ENCODE measurements at regions of chr1 and their contacts with region 1.

Region 1: DNA sequence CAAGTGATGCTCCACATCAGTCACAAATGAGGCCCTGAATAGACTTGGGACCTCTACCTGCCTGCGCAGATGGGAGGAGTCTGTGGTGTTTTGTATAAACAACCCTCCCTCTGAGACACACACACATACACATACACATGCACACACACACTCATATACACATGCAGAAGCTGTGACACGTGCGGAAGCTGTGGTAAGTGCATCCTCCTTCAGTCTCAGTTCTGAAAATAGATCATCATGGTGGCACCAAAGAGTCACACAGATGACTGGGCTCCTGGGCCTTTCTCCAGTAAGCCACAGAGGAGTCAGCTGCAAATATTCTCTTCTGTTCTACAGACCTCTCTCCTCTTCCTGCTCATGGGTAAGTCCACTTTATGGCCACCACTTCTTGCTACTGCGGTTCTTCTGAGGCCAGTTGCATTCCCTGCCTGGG is at the start of gene LY9:
- DNase-seq: peak; percentile 92
- H3K4me3 Mint-ChIP-seq: peak within 1 kb of the TSS; percentile 86
- H3K27ac Mint-ChIP-seq: peak within 1 kb of the TSS; percentile 98
- H3K4me1 Mint-ChIP-seq: peaks cover 50% of the 10 kb centered on the region
- H3K27me3 Mint-ChIP-seq: no peaks in the 10 kb centered on the region
- total RNA-seq, gene LY9: 19.5 to 19.6 TPM

Region 2: DNA sequence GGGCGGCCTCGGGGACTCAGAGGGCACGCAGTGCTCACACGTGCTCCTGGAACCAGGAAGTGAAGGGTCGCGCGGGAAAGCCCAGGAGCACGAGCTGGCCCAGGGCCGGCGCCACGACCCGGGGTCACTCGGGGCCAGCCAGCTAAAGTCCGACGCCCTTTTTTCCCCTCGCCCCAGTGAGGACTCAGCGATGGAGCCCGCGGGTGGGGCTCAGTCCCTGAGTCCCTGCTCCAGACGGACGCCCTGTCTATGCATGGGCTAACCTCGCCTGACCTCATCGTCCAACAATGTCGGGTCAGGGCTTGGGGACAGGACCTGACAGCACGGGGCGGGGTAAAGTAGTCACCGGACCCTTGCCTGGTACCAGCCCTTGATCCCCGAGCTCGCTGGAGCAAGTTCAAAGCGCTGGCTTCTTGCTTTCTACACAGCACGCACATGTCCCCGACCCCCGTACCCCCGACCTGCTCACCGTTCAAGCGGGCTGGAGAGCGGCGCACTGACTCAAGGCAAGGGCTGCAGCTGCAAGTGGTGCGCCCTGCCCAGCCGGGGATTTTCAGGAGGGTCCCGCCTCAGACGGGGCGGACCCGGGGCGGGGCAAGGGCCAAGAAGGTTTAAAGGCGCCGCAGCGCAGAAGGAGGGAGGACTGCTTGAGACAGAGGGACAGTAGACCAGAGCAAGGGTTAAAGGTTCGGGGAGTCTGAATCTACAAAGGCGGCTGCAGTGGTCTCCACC is 870.8 kb before region 1 on chr1 and contains the start of gene TAGLN2:
- CTCF ChIA-PET with region 1: no interaction called
- intact Hi-C with region 1: loop called (anchors 10 kb)
- DNase-seq: peak; percentile 89
- H3K4me3 Mint-ChIP-seq: peak within 1 kb of the TSS; percentile 91
- H3K27ac Mint-ChIP-seq: peak within 1 kb of the TSS; percentile 93
- H3K4me1 Mint-ChIP-seq: peaks cover 42% of the 10 kb centered on the region
- H3K27me3 Mint-ChIP-seq: no peaks in the 10 kb centered on the region
- total RNA-seq, gene TAGLN2: 453 to 454 TPM

Region 3: DNA sequence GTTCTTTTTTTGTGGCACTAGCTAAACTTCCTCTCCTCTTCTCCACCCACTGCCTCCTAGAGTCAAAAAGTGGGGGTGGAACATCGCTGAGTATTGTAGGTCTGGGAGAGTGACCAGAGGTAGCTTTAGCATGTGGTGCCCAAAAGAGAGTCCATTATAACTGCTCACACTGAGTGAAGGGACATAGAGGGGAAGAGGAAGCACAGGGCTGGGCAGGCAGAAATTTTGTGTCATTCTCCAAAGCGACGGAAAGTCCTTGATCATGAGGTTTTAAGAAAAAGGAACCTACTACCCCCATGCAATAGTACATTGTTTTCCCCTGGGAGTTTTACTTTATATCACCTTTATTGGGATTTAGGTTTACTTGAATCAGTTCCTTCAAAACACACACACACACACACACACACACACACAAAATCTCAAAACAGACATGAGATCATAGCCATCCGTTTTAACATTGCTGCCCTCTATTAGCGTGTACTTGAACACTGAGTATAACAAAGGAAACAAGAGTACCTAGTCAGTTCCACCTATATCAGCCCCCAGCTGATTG is 220.8 kb before region 1 on chr1:
- CTCF ChIA-PET with region 1: no interaction called
- intact Hi-C with region 1: loop called (anchors 2 kb)
- DNase-seq: no peak
- H3K4me3 Mint-ChIP-seq: peak overlapping the region; percentile 46
- H3K27ac Mint-ChIP-seq: peak overlapping the region; percentile 94
- H3K4me1 Mint-ChIP-seq: peaks cover 86% of the 10 kb centered on the region
- H3K27me3 Mint-ChIP-seq: no peaks in the 10 kb centered on the region

Region 4: GRCh38 chr1:160637821-160638539 is 158.0 kb before region 1 on chr1:
- CTCF ChIA-PET with region 1: no interaction called
- intact Hi-C with region 1: no loop called
- DNase-seq: peak; percentile 75
- H3K4me3 Mint-ChIP-seq: peak overlapping the region; percentile 66
- H3K27ac Mint-ChIP-seq: peak overlapping the region; percentile 95
- H3K4me1 Mint-ChIP-seq: peaks cover 92% of the 10 kb centered on the region
- H3K27me3 Mint-ChIP-seq: no peaks in the 10 kb centered on the region

Region 5: DNA sequence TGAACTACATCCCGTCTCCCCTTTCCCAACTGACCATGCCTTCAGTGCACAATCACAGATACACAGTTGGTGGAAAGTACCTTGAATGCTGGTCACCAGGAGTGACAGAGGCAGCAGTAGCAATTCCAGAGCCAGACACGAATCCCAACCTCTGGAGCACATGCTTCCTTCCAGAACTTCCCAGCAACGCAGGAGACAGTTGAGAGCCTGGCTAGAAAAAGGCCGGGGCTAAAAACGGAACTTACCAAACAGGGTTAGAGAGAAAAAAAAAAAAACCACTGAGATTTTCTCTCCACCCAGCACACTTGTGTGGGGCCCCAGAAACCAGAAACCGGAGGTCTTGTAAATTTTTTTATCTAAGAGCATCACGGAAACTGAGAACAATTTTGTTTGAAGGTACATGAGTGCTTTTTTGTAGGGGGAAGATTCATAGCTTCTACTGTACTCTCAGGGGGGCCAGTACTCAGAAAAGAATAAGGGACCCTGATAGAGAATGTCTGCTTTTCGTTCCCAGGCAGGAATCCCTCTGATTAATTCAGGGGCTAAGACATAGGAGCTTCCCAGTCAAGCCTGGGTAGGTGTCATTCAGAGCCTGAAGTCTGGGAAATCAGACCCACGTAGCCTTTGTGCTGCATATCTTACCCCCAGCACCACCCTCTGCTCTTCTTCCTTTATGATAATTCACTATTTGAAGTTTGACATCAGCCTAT is 84.2 kb before region 1 on chr1 and contains the start of gene CD48:
- CTCF ChIA-PET with region 1: interaction called, 5 read pairs
- intact Hi-C with region 1: loop called (anchors 1 kb)
- DNase-seq: peak; percentile 70
- H3K4me3 Mint-ChIP-seq: no peak within 1 kb of the TSS
- H3K27ac Mint-ChIP-seq: no peak within 1 kb of the TSS
- H3K4me1 Mint-ChIP-seq: peaks cover 28% of the 10 kb centered on the region
- H3K27me3 Mint-ChIP-seq: no peaks in the 10 kb centered on the region
- total RNA-seq, gene CD48: 338 to 340 TPM

Region 6: GRCh38 chr1:160746836-160747500 is 49.0 kb before region 1 on chr1:
- CTCF ChIA-PET with region 1: no interaction called
- intact Hi-C with region 1: no loop called
- DNase-seq: no peak
- H3K4me3 Mint-ChIP-seq: no peak overlapping the region
- H3K27ac Mint-ChIP-seq: peak overlapping the region; percentile 81
- H3K4me1 Mint-ChIP-seq: peaks cover 94% of the 10 kb centered on the region
- H3K27me3 Mint-ChIP-seq: no peaks in the 10 kb centered on the region

Region 7: GRCh38 chr1:160768295-160768657 is 27.7 kb before region 1 on chr1:
- CTCF ChIA-PET with region 1: interaction called, 115 read pairs
- intact Hi-C with region 1: loop called (anchors 1 kb)
- DNase-seq: peak; percentile 96
- H3K4me3 Mint-ChIP-seq: peak overlapping the region; percentile 79
- H3K27ac Mint-ChIP-seq: peak overlapping the region; percentile 99
- H3K4me1 Mint-ChIP-seq: peaks cover 68% of the 10 kb centered on the region
- H3K27me3 Mint-ChIP-seq: no peaks in the 10 kb centered on the region

Region 8: GRCh38 chr1:160813215-160813614 is 17.2 kb after region 1 on chr1:
- CTCF ChIA-PET with region 1: interaction called, 4 read pairs
- intact Hi-C with region 1: loop called (anchors 1 kb)
- DNase-seq: peak; percentile 34
- H3K4me3 Mint-ChIP-seq: no peak overlapping the region
- H3K27ac Mint-ChIP-seq: peak overlapping the region; percentile 47
- H3K4me1 Mint-ChIP-seq: peaks cover 44% of the 10 kb centered on the region
- H3K27me3 Mint-ChIP-seq: no peaks in the 10 kb centered on the region

Region 9: DNA sequence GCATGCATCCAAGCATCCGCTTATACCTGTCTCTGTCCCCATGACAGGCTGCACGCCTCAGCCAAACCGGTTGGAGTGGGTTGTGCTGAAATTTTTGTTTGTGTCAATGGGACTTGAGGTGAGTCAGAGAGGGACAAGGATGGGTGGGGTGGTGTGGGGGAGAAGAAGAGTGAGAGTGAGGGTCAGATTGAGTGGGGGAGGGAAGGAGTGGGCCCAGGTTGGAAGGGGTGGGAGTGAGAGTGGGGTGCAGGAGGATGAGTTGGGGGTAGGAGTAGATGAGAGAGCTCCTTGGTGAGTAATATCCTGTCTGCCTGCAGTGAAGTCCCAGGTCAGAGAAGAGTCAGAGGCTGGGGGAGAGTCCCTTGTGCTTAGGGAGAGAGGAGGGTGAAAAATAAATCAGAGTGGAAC is 296.7 kb after region 1 on chr1:
- CTCF ChIA-PET with region 1: no interaction called
- intact Hi-C with region 1: loop called (anchors 2 kb)
- DNase-seq: peak; percentile 80
- H3K4me3 Mint-ChIP-seq: no peak overlapping the region
- H3K27ac Mint-ChIP-seq: no peak overlapping the region
- H3K4me1 Mint-ChIP-seq: peaks cover 61% of the 10 kb centered on the region
- H3K27me3 Mint-ChIP-seq: no peaks in the 10 kb centered on the region